Activated CD8-positive, alpha-beta T cell treated with anti-CD3 and anti-CD28 coated beads, Interleukin-2, amount 10 ng/mL, durations not matched to agents 7 days and 5 days (primary cell): ENCODE measurements at regions of chr22 and their contacts with region 1.

Region 1: DNA sequence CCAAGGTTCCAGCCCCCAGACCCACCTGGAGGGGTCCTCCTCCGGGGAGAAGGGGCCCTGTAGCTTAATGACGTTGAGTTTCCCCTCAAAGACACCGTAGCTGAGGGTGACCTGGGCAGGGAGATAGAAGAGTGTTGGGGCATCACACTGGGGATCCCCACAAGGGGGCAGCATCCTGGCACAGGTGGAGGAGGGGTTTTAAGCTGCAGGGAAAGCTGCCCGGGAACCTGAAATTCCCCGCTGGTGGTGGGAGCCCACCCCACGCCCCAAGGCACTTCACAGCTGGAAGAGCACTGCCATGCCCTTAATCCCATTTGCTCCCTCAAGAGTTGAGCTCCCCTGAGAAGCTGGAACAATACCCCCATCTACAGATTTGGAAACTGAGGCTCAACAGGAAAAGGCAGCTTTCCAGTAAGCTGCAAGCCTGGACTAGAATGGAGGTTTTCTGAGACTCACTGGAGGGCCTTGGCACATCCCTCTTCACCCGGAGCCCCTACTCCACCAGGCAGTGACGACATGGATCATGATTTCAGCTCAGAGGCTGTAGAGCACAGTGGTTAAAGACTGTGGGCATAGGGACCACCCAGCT is 13.7 kb downstream of the MFNG start:
- DNase-seq: peak; percentile 51
- ATAC-seq: peak; percentile 56
- H3K4me3 Mint-ChIP-seq: no peak overlapping the region
- H3K27ac Mint-ChIP-seq: peak overlapping the region; percentile 57
- H3K4me1 Mint-ChIP-seq: peaks cover 20% of the 10 kb centered on the region
- H3K27me3 Mint-ChIP-seq: no peaks in the 10 kb centered on the region

Region 2: GRCh38 chr22:37486224-37486845 is 13.8 kb after region 1 on chr22 and contains the start of gene MFNG:
- CTCF ChIA-PET with region 1: interaction called, 26 read pairs
- POLR2A ChIA-PET with region 1: interaction called, 3 read pairs
- DNase-seq: peak; percentile 81
- ATAC-seq: peak; percentile 62
- H3K4me3 Mint-ChIP-seq: peak within 1 kb of the TSS; percentile 88
- H3K27ac Mint-ChIP-seq: peak within 1 kb of the TSS; percentile 97
- H3K4me1 Mint-ChIP-seq: peaks cover 69% of the 10 kb centered on the region
- H3K27me3 Mint-ChIP-seq: no peaks in the 10 kb centered on the region
- total RNA-seq, gene MFNG: 227 to 232 TPM

Region 3: GRCh38 chr22:37498289-37498909 is 25.9 kb after region 1 on chr22:
- CTCF ChIA-PET with region 1: interaction called, 44 read pairs
- POLR2A ChIA-PET with region 1: no interaction called
- DNase-seq: peak; percentile 80
- ATAC-seq: peak; percentile 94
- H3K4me3 Mint-ChIP-seq: no peak overlapping the region
- H3K27ac Mint-ChIP-seq: no peak overlapping the region
- H3K4me1 Mint-ChIP-seq: peaks cover 21% of the 10 kb centered on the region
- H3K27me3 Mint-ChIP-seq: peaks cover 6% of the 10 kb centered on the region